T-cell (primary cell): ENCODE measurements at regions of chr2 and their contacts with region 1.

Region 1: DNA sequence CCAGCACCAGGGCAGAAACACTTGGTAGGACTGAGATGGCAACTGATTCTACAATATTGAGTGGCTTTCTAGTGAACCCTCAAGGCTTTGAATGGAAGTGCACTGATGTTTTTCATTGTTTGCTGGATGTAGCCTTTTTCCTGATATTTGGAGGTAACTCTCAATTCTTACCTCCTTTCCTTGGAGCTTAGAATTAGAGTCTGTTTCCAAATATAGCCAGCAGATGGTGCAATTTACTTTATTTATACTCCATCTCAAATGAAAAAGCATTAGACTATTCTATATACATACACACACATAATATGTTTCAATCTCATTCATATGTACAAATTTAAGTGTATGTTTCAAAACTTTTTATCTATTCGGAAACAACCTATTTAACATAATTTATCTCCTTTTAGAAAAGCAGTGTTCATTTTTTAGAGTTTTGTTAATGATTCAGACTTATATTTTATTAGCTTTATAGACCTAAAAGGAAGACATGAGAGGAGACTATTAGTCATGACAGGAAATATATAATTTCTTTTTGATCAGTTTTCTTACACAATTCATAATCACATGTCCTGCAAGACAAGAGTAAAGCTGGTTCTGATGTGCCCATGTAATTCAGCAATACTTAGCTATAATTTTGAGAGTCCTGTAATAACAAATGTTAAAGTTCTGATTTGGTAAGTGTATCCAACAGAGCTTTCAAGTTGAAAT is 124.8 kb downstream of the NUP35 start:
- DNase-seq: peak in 1 of 35 experiments; percentile 14
- ATAC-seq: no peak
- H3K4me3 ChIP-seq: no peak overlapping the region
- H3K4me3 Mint-ChIP-seq: no peak overlapping the region
- H3K27ac ChIP-seq: no peak overlapping the region
- H3K27ac Mint-ChIP-seq: no peak overlapping the region
- H3K4me1 ChIP-seq: no peaks in the 10 kb centered on the region
- H3K4me1 Mint-ChIP-seq: no peaks in the 10 kb centered on the region
- H3K27me3 ChIP-seq: no peaks in the 10 kb centered on the region
- H3K27me3 Mint-ChIP-seq: peaks cover 2 to 5% of the 10 kb centered on the region in 2 donors

Region 2: DNA sequence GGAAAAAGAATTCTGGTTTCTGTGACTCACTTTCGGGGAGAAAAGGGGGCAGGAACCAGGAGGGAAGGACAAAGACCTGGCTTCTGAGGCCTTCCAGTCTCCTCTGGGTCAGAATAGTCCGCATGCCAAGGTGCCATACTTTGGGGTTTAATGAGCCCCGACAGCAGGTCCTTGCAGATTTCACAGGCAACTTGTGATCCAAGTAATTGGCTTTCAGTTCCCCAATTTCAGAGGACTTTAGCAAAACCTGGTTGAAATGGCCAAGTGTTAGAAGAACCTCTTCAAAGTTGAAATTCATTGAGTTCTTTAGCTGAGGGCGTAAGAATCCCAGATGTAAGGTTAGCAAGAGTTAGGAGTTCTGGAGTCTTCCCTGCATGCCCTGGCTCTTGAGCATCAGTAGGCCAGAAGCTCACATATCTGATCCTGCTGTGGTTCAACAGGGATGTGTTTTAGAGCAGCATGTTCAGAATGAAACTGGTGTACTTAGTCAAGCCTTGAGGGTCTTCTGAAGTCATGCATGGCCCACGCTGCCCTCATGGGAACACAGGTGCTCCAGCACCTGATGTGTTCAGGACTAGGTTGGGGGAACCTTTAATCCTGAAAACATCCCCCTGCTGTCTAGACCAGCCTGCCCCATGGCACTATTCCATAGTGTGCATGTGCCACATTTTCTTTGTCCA is 18.3 kb after region 1 on chr2:
- CTCF ChIA-PET with region 1: no interaction called
- POLR2A ChIA-PET with region 1: interaction called in 1 of 2 experiments, 15 read pairs
- DNase-seq: no peak
- ATAC-seq: no peak
- H3K4me3 ChIP-seq: no peak overlapping the region
- H3K4me3 Mint-ChIP-seq: no peak overlapping the region
- H3K27ac ChIP-seq: no peak overlapping the region
- H3K27ac Mint-ChIP-seq: no peak overlapping the region
- H3K4me1 ChIP-seq: no peaks in the 10 kb centered on the region
- H3K4me1 Mint-ChIP-seq: no peaks in the 10 kb centered on the region
- H3K27me3 ChIP-seq: no peaks in the 10 kb centered on the region
- H3K27me3 Mint-ChIP-seq: no peaks in the 10 kb centered on the region

Region 3: GRCh38 chr2:183455056-183455455 is 206.0 kb after region 1 on chr2:
- CTCF ChIA-PET with region 1: no interaction called
- POLR2A ChIA-PET with region 1: no interaction called
- DNase-seq: no peak
- ATAC-seq: no peak
- H3K4me3 ChIP-seq: no peak overlapping the region
- H3K4me3 Mint-ChIP-seq: no peak overlapping the region
- H3K27ac ChIP-seq: no peak overlapping the region
- H3K27ac Mint-ChIP-seq: no peak overlapping the region
- H3K4me1 ChIP-seq: no peaks in the 10 kb centered on the region
- H3K4me1 Mint-ChIP-seq: no peaks in the 10 kb centered on the region
- H3K27me3 ChIP-seq: no peaks in the 10 kb centered on the region
- H3K27me3 Mint-ChIP-seq: no peaks in the 10 kb centered on the region